ENCODE measurements at regions of chr6 and their contacts with region 1.

Region 1: GRCh38 chr6:119110601-119111548 is 32.4 kb upstream of the FAM184A start:
- DNase-seq: peak in 1 of 3 donors; percentile 76
- ATAC-seq: peak; percentile 68
- H3K4me3 ChIP-seq: no peak overlapping the region
- H3K4me1 ChIP-seq: no peaks in the 10 kb centered on the region
- CTCF ChIP-seq: no peak

Region 2: GRCh38 chr6:118968416-118968815 is 142.5 kb before region 1 on chr6:
- intact Hi-C with region 1: loop called (anchors 5 to 10 kb)
- DNase-seq: no peak
- ATAC-seq: no peak
- H3K4me3 ChIP-seq: no peak overlapping the region
- H3K4me1 ChIP-seq: no peaks in the 10 kb centered on the region
- CTCF ChIP-seq: no peak

Region 3: DNA sequence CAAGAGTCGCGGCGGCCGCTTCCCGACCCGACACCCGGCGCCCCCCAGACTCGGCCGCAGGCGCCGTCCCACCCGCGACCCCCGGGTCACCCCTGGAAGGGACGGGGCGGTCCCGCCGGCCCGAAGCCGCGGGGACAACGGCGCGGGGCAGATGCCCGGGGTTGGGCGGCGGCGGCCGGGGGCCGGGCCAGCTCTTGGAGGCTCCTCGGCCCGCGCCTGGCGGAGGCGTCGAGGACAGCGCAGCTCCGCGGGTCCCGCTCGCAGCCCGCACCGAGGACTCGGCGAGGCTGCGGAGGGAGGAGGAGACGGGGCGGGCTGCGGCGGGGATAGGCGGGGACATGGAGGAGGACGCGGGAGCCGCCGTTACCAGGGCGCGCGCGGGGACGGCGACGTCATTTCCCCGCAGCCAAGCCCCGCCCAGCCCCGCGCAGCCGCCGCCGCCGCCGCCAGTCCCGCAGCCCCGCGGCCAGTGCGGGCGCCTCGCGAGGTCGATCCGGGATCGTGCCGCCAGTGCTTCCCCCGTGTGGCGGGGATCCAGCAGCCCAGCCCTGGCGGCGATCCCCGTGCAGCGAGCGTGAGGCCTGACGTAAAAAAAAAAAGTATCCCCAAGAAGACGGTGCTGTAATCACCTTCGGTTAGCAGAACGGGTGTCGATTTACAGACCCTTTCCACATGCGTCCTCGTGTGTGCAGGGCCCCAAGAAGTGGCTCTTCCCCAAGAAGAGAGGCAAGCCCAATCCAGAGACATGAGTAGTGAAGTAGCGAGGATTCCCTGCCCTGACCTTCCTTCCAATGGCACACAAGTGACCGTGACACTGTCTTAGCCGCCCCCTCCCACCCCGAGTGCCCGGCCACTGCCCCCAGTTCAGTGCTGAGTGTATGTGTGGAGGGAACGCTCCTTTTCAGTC is 32.2 kb before region 1 on chr6 and contains the start of gene FAM184A:
- intact Hi-C with region 1: no loop called
- DNase-seq: peak; percentile 55 to 75 (median 65)
- ATAC-seq: peak; percentile 83
- H3K4me3 ChIP-seq: peak within 1 kb of the TSS; percentile 42
- H3K4me1 ChIP-seq: peaks cover 8% of the 10 kb centered on the region
- CTCF ChIP-seq: peak; percentile 30
- total RNA-seq, gene FAM184A: 0.60 to 3.4 (median 0.87) TPM

Region 4: GRCh38 chr6:119350043-119350951 is 239.4 kb after region 1 on chr6:
- intact Hi-C with region 1: no loop called
- DNase-seq: peak in 1 of 3 donors; percentile 37
- ATAC-seq: peak; percentile 3
- H3K4me3 ChIP-seq: peak overlapping the region; percentile 90
- H3K4me1 ChIP-seq: peaks cover 12% of the 10 kb centered on the region
- CTCF ChIP-seq: no peak